Activated CD4-positive, alpha-beta memory T cell treated with anti-CD3 and anti-CD28 coated beads for 36 hours (primary cell): ENCODE measurements at regions of chr4 and their contacts with region 1.

Region 1: GRCh38 chr4:48141048-48141447 is 7.0 kb upstream of the TXK start:
- DNase-seq: no peak
- H3K4me3 Mint-ChIP-seq: no peak overlapping the region
- H3K27ac Mint-ChIP-seq: no peak overlapping the region
- H3K4me1 Mint-ChIP-seq: peaks cover 46% of the 10 kb centered on the region
- H3K27me3 Mint-ChIP-seq: no peaks in the 10 kb centered on the region

Region 2: GRCh38 chr4:47686294-47686872 is 454.7 kb before region 1 on chr4:
- CTCF ChIA-PET with region 1: no interaction called
- POLR2A ChIA-PET with region 1: no interaction called
- intact Hi-C with region 1: loop called (anchors 1 kb)
- DNase-seq: peak; percentile 81
- H3K4me3 Mint-ChIP-seq: no peak overlapping the region
- H3K27ac Mint-ChIP-seq: no peak overlapping the region
- H3K4me1 Mint-ChIP-seq: peaks cover 2% of the 10 kb centered on the region
- H3K27me3 Mint-ChIP-seq: peaks cover 8% of the 10 kb centered on the region

Region 3: DNA sequence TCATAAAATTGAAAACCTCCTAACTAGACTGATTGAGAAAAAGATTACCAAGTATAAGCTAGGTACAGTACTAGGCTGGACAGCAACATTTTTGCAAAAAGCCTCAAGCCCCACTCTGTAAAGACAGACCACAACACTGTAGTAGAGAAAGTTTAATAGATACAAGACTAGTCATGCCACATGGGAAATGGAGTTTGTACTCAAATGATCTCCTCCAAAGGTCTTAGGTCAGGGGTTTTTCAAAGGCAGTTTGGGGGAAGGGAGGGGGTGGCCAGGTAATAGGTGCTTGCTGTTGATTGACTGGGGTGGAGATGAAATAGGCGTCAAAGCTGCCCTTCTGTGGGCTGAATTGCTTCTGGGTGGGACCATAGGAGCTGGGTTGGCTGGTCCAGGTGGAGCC is 138.8 kb before region 1 on chr4:
- CTCF ChIA-PET with region 1: interaction called, 14 read pairs
- POLR2A ChIA-PET with region 1: no interaction called
- intact Hi-C with region 1: loop called (anchors 1 kb)
- DNase-seq: no peak
- H3K4me3 Mint-ChIP-seq: no peak overlapping the region
- H3K27ac Mint-ChIP-seq: no peak overlapping the region
- H3K4me1 Mint-ChIP-seq: no peaks in the 10 kb centered on the region
- H3K27me3 Mint-ChIP-seq: peaks cover 6% of the 10 kb centered on the region

Region 4: GRCh38 chr4:48085821-48086607 is 55.0 kb before region 1 on chr4:
- CTCF ChIA-PET with region 1: interaction called, 31 read pairs
- POLR2A ChIA-PET with region 1: no interaction called
- intact Hi-C with region 1: no loop called
- DNase-seq: no peak
- H3K4me3 Mint-ChIP-seq: no peak overlapping the region
- H3K27ac Mint-ChIP-seq: no peak overlapping the region
- H3K4me1 Mint-ChIP-seq: peaks cover 5% of the 10 kb centered on the region
- H3K27me3 Mint-ChIP-seq: no peaks in the 10 kb centered on the region

Region 5: DNA sequence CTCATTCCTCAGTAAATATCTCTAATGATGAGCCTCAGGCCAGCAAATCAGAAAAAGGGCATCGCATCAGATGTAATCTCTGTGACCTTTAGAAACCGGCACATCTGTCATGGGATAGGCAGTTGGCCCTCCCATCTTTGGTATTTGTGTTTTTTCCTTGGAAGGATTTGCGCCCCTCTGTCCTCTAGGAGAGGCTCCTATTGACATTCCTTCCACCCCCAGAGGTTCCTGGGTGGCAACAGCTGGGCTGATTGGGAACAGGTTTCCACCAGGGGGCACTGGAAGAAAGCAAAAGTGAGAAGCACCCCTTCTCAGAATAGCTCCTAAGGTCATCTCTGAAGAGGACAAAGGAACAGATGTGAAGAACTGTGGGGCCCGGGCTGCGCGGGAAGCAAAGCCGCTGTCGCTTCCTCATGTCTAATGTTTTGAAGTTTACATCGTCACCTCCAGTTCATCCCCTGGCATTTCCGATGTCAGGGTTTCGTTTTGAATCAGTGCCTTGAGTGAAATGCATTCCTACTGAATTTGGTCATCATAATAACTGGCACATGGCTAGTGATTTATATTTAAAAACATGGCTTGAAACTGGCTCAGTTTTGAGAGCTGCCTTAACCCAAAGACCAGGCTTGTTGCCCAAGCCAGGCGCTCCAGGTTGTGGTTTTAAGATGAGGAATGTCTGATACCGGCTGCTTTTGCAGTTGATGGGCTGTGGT is 13.2 kb before region 1 on chr4:
- CTCF ChIA-PET with region 1: interaction called, 112 read pairs
- POLR2A ChIA-PET with region 1: interaction called, 21 read pairs
- intact Hi-C with region 1: loop called (anchors 1 kb)
- DNase-seq: peak; percentile 93
- H3K4me3 Mint-ChIP-seq: peak overlapping the region; percentile 63
- H3K27ac Mint-ChIP-seq: peak overlapping the region; percentile 95
- H3K4me1 Mint-ChIP-seq: peaks cover 89% of the 10 kb centered on the region
- H3K27me3 Mint-ChIP-seq: no peaks in the 10 kb centered on the region